WTC11 (cell line): ENCODE measurements at regions of chr16 and their contacts with region 1.

Region 1: DNA sequence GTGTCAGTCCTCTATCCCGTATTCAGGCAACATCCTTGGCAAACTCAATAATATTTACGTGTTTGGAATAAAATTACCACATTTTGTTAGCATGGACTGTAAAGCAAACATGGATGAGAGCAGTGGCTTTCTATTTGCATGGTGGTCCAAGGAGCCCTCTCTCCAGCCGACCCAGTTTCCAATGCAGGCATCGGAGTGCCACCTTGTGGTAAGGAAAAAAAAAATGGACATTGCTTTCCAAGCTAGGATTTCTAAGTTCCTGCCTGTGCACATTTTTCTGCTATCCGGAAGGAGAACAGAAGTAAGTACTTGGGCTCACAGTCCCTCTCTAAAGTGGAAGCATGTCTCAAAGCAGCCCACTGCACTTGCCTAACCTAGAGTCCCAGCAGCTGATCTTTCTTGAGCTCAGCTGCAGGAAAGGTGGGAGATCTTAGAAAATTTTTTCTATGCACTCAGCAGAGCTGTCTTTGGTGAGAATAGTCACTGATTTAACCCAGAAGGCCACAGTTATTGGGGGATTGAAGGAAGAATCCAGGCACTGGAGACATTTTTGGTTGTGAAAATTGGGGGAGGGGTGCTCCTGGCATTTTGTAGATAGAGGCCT is 46.0 kb upstream of the ERCC4 start:
- DNase-seq: peak; percentile 36
- ATAC-seq: peak; percentile 75
- H3K4me3 Mint-ChIP-seq: no peak overlapping the region
- H3K27ac Mint-ChIP-seq: no peak overlapping the region
- H3K4me1 Mint-ChIP-seq: no peaks in the 10 kb centered on the region
- H3K27me3 Mint-ChIP-seq: no peaks in the 10 kb centered on the region; the same call in none of the 2 replicates
- CTCF ChIP-seq: peak; percentile 42

Region 2: GRCh38 chr16:13742928-13743327 is 131.0 kb before region 1 on chr16:
- CTCF ChIA-PET with region 1: interaction called, 11 read pairs
- POLR2A ChIA-PET with region 1: no interaction called
- DNase-seq: no peak
- ATAC-seq: no peak
- H3K4me3 Mint-ChIP-seq: no peak overlapping the region
- H3K27ac Mint-ChIP-seq: no peak overlapping the region
- H3K4me1 Mint-ChIP-seq: no peaks in the 10 kb centered on the region
- H3K27me3 Mint-ChIP-seq: no peaks in the 10 kb centered on the region; the same call in 1 of the 2 replicates
- CTCF ChIP-seq: no peak

Region 3: DNA sequence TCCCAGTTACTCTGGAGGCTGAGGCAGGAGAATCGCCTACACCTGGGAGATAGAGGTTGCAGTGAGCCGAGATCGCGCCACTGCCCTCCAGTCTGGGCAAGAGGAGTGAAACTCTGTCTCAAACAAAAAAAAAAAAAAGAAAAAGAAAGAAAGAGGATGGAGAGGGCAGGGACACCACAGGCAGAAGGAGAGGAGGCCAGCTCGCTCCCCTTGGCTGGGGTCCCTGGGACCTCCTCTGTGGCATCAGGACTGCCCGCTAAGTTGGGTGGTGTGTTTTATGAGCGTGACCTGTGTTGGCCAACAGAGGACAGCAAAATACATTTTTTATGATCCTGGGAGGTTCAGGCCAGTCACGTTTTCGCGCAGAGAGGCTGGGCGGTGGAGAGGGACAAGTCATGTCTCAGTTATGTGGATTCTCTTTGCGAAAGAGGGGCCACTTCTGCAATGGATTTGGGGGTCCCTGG is 426.8 kb after region 1 on chr16:
- CTCF ChIA-PET with region 1: no interaction called
- POLR2A ChIA-PET with region 1: interaction called, 11 read pairs
- DNase-seq: peak; percentile 59
- ATAC-seq: peak; percentile 36
- H3K4me3 Mint-ChIP-seq: peak overlapping the region; percentile 79
- H3K27ac Mint-ChIP-seq: peak overlapping the region; percentile 71; the same call in 1 of the 2 replicates
- H3K4me1 Mint-ChIP-seq: peaks cover 30% of the 10 kb centered on the region
- H3K27me3 Mint-ChIP-seq: peaks cover 8% of the 10 kb centered on the region; the same call in 1 of the 2 replicates
- CTCF ChIP-seq: no peak